ENCODE measurements at regions of chr19 and their contacts with region 1.

Region 1: DNA sequence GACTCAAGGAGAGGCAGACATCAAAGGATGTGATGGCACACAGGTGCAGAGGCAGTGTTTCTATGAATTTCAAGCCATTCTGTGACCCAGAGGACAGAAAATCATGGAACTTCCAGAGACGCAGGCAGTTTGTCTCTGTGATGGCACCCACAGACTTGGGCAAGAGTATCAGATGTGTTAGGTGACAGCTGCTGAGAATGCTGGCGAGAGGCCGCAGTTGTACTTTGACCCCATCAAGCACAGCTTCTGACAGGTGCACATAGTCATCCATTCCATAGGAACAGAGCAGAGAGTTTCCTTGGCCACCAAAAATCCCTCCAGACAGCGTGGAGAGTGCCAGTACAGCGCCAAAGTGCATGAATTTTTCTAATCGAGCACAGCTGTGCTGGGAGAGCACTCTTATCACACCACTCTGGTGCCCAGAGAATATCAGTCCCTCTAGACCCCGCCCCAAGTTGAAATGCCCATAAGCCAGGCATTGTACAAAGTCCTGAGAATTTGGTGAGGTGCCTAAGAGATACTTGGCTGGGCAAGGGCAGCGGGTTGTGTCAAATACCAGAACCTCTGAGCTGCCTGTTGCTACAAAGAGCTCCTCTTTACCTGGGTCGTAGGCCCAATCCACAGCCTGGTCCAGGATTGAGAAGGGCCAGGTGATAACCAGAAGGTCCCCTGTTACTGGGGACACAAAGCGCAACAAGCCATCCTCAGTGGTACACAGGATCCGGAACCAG is 12.4 kb downstream of the WDR87 start:
- DNase-seq: no peak

Region 2: DNA sequence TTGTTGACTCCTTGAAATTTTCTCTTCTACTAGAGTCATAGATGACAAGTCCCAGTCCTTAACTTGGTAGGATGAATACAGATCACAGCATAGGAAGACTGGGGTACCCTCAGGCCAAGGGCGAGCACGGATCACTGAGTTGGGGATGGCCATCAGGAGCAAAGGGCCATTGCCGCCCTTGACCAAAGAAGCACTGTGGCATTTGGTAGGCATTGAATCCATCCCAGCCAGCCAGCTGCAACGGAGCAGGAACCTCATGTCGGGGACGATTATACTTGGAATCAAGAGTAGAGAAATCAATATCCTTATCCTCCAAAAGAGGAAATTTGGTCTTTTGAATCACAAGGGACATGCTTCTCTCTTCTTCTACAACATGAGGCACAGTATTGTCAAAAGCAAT is 64.5 kb before region 1 on chr19:
- intact Hi-C with region 1: no loop called
- DNase-seq: no peak

Region 3: GRCh38 chr19:38213911-38214625 is 320.1 kb after region 1 on chr19:
- intact Hi-C with region 1: loop called in 1 of 2 experiments (anchors 10 kb)
- DNase-seq: no peak